PC-9 (cell line): ENCODE measurements at regions of chr17 and their contacts with region 1.

Region 1: DNA sequence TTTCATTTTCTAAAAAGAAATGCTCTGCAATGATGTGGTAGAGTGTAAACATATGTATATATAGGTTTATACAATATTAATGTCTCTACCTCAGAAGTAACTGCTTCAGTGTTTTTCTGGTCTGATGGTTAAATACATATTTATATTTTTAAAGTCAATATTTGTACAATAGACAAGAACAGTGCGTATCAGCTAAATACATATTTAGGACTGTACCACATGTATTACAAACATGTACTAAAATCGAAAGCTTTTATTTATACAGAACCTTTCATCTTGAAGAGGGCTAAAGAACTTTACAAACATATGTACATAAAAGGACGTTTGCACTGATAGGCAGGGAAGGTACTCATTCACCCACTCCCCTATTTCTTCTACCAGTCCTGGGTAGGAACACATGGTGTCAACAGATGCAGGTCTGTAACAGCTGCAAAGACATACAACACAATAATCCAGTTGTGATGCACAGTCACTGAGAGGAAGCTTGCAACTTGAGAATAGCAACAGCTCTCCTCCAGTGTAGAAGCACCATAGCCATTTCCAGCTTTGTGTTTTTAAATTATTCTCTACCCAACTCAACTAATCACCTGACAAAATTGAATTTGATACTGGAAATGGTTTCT is 206.9 kb upstream of the C17orf78 start:
- DNase-seq: no peak
- H3K4me3 ChIP-seq: no peak overlapping the region
- H3K27ac ChIP-seq: no peak overlapping the region
- H3K4me1 ChIP-seq: no peaks in the 10 kb centered on the region
- H3K27me3 ChIP-seq: no peaks in the 10 kb centered on the region
- CTCF ChIP-seq: no peak

Region 2: GRCh38 chr17:36545465-36546417 is 623.1 kb before region 1 on chr17:
- CTCF ChIA-PET with region 1: no interaction called
- POLR2A ChIA-PET with region 1: interaction called, 14 read pairs
- intact Hi-C with region 1: no loop called
- DNase-seq: peak; percentile 93 to 97
- H3K4me3 ChIP-seq: peak overlapping the region; percentile 78
- H3K27ac ChIP-seq: peak overlapping the region; percentile 62
- H3K4me1 ChIP-seq: peaks cover 27% of the 10 kb centered on the region
- H3K27me3 ChIP-seq: no peaks in the 10 kb centered on the region
- CTCF ChIP-seq: no peak